Activated CD8-positive, alpha-beta T cell treated with anti-CD3 and anti-CD28 coated beads for 36 hours (primary cell): ENCODE measurements at regions of chr6 and their contacts with region 1.

Region 1: DNA sequence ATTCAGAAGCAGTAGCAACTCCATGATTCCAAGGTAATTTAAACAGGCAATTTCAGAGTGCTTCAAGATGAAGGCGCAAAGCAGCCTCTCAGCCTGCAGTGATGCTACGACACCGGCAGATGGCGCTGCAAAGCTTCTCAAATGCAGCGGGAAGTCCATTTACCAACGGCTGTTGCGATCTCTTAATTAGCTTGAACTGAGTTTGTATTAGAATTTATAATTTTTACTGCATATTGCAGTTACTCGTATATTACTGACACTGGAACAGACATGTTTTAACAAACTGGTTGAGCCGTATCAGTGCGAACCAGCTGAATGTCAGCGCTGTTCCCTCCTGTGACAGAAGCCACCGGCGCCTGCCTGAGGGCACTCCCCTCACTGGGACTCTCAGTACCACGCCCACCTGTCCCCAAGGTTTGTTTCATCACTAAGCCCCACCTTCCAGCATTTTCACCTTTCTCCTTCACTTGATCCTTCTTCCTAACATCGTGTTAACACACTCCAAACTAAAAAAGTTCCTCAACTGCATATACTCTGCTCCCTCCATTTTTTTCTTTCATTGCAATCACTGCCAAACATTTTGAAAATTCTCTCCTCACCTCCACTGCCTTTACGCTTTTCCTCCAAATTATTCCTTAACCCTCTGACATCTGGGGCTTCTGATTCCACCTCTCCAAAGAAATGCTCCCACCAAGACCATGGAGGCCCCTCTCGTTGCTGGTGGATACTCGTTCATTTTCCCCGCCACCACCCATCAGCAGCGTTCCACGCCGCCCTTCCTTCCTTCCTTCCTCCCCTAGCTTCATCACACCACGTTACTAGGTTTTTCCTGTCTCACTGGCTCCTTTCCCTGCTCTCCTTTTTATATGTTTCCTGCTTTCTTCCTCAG is 14.5 kb downstream of the GNL1 start:
- DNase-seq: peak; percentile 85
- ATAC-seq: peak; percentile 75
- H3K4me3 Mint-ChIP-seq: peak overlapping the region; percentile 71
- H3K27ac Mint-ChIP-seq: peak overlapping the region; percentile 77
- H3K4me1 Mint-ChIP-seq: peaks cover 36% of the 10 kb centered on the region
- H3K27me3 Mint-ChIP-seq: no peaks in the 10 kb centered on the region
- CTCF ChIP-seq: peak; percentile 98

Region 2: DNA sequence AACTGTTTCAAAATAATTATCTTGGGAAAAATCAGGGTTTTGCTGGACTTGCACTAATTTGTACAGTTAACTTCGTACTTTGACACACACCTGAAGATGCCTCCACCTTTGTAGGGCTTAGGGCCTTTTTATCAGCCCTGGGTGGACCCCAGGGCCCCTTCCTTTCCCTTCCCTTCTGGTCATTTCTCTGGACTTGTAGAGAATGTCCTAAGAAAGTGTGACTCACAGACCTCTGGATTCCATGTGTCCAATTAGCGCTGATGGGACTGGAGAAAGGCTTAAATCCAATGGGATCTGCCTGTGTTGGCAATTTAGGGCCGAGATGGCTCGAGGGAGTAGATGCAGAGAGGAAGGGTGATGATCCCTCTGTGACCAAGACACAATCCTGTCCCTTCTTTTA is 369.1 kb before region 1 on chr6:
- CTCF ChIA-PET with region 1: no interaction called
- POLR2A ChIA-PET with region 1: no interaction called
- intact Hi-C with region 1: no loop called
- DNase-seq: no peak
- ATAC-seq: no peak
- H3K4me3 Mint-ChIP-seq: no peak overlapping the region
- H3K27ac Mint-ChIP-seq: no peak overlapping the region
- H3K4me1 Mint-ChIP-seq: peaks cover 4% of the 10 kb centered on the region
- H3K27me3 Mint-ChIP-seq: peaks cover 65% of the 10 kb centered on the region
- CTCF ChIP-seq: no peak

Region 3: GRCh38 chr6:30364591-30364990 is 177.2 kb before region 1 on chr6:
- CTCF ChIA-PET with region 1: no interaction called
- POLR2A ChIA-PET with region 1: no interaction called
- intact Hi-C with region 1: no loop called
- DNase-seq: no peak
- ATAC-seq: no peak
- H3K4me3 Mint-ChIP-seq: no peak overlapping the region
- H3K27ac Mint-ChIP-seq: no peak overlapping the region
- H3K4me1 Mint-ChIP-seq: no peaks in the 10 kb centered on the region
- H3K27me3 Mint-ChIP-seq: peaks cover 55% of the 10 kb centered on the region
- CTCF ChIP-seq: no peak

Region 4: DNA sequence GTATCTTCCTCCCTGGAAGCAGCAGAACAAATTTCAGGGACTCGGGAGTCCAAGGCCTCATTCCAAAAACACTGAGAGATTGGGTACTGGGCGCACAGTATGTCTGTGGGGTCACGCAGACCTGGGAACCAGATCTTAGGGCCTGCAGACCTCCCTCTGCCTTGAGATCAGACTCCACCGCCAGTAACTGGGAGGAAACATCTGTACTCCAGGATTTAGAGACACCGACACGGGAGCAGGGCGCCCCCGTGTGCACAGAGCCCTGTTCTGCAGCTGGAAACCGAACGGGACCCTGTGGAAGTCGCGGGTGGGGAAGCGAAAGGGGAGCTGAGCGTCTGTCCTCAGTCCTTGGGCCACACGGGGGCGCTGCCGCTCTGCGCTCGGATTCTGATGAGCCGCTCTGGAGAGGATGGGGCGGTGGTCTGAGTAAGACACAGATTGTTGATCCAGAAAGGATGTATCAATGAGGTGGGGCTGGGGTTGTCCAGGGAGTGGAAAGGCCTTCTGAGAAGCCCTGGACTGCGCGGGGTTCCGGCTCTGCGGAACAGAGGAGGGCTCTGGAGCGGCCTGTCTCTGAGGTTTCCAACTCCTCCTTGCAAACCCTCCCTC is 88.1 kb before region 1 on chr6:
- CTCF ChIA-PET with region 1: interaction called, 52 read pairs
- POLR2A ChIA-PET with region 1: no interaction called
- intact Hi-C with region 1: no loop called
- DNase-seq: peak; percentile 95
- ATAC-seq: peak; percentile 91
- H3K4me3 Mint-ChIP-seq: no peak overlapping the region
- H3K27ac Mint-ChIP-seq: no peak overlapping the region
- H3K4me1 Mint-ChIP-seq: peaks cover 29% of the 10 kb centered on the region
- H3K27me3 Mint-ChIP-seq: peaks cover 82% of the 10 kb centered on the region
- CTCF ChIP-seq: peak; percentile 70

Region 5: GRCh38 chr6:30489081-30490025 is 52.4 kb before region 1 on chr6 and contains the start of gene HLA-E:
- CTCF ChIA-PET with region 1: interaction called, 515 read pairs
- POLR2A ChIA-PET with region 1: interaction called, 99 read pairs
- intact Hi-C with region 1: no loop called
- DNase-seq: peak; percentile 94
- ATAC-seq: peak; percentile 75
- H3K4me3 Mint-ChIP-seq: peak within 1 kb of the TSS; percentile 97
- H3K27ac Mint-ChIP-seq: peak within 1 kb of the TSS; percentile 98
- H3K4me1 Mint-ChIP-seq: peaks cover 38% of the 10 kb centered on the region
- H3K27me3 Mint-ChIP-seq: no peaks in the 10 kb centered on the region
- CTCF ChIP-seq: no peak
- total RNA-seq, gene HLA-E: 493 to 499 TPM

Region 6: GRCh38 chr6:30508890-30509736 is 32.6 kb before region 1 on chr6:
- CTCF ChIA-PET with region 1: interaction called, 64 read pairs
- POLR2A ChIA-PET with region 1: interaction called, 11 read pairs
- intact Hi-C with region 1: no loop called
- DNase-seq: peak; percentile 39
- ATAC-seq: peak; percentile 65
- H3K4me3 Mint-ChIP-seq: peak overlapping the region; percentile 48
- H3K27ac Mint-ChIP-seq: peak overlapping the region; percentile 95
- H3K4me1 Mint-ChIP-seq: peaks cover 53% of the 10 kb centered on the region
- H3K27me3 Mint-ChIP-seq: no peaks in the 10 kb centered on the region
- CTCF ChIP-seq: no peak

Region 7: GRCh38 chr6:30571075-30571768 is 29.5 kb after region 1 on chr6 and contains the start of gene ABCF1:
- CTCF ChIA-PET with region 1: interaction called, 49 read pairs
- POLR2A ChIA-PET with region 1: interaction called, 3 read pairs
- intact Hi-C with region 1: no loop called
- DNase-seq: peak; percentile 99
- ATAC-seq: peak; percentile 92
- H3K4me3 Mint-ChIP-seq: peak within 1 kb of the TSS; percentile 86
- H3K27ac Mint-ChIP-seq: peak within 1 kb of the TSS; percentile 96
- H3K4me1 Mint-ChIP-seq: peaks cover 63% of the 10 kb centered on the region
- H3K27me3 Mint-ChIP-seq: no peaks in the 10 kb centered on the region
- CTCF ChIP-seq: no peak
- total RNA-seq, gene ABCF1: 86.9 to 88.0 TPM